GM12878 (cell line): ENCODE measurements at regions of chr3 and their contacts with region 1.

Region 1: DNA sequence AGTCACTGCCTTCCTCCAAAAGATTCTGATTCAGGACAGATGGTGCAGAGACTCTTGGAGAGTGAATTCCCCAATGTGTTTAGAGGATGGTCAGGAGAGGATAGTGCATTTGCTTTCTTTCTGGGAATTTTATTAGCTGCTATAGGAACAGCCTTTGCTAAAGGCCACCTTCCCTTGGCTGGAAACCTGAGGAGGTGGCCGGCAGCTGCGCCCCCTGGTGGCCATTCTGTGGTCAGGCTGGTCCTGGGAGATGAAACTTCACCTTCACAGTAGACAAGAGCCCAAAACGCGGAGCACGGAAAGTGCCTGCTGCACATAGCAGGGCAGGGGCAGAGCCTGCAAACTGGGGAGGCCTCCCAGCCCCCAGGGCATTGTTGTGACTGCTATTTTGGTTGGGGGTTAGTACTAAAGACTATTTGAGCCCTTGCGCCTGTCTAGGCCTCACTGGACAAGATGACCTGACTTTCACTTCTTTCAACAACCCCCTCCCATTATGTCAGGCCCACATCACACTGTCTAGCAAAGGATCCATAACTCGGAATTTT is 34.3 kb downstream of the SEC22C start:
- DNase-seq: no peak
- ATAC-seq: peak; percentile 91
- H3K4me3 ChIP-seq: no peak overlapping the region
- H3K27ac ChIP-seq: no peak overlapping the region
- H3K4me1 ChIP-seq: no peaks in the 10 kb centered on the region
- H3K27me3 ChIP-seq: no peaks in the 10 kb centered on the region
- CTCF ChIP-seq: peak; percentile 83 to 97 (median 90)
- EP300 ChIP-seq: no peak
- POLR2A ChIP-seq: no peak
- RAD21 ChIP-seq: peak; percentile 45

Region 2: DNA sequence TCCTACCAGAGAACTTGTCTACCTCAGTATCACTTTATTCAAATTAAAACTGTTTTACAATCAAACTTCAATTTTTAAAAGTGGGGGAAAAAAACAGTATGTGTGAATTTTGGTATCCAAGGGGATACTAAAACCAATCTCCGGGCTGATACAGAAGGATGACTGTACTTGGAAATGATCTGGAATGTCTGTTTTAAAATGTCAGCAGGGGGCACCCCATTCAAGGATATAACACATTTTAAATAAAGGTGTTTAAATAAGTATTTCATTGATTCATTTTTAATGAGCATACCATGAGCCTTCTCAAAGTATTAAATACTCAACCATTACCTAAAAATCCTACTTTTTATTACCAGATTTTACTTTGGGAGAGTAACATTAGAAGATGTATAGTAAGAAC is 653.5 kb before region 1 on chr3:
- CTCF ChIA-PET with region 1: no interaction called
- POLR2A ChIA-PET with region 1: no interaction called
- RAD21 ChIA-PET with region 1: no interaction called
- SMC1A ChIA-PET with region 1: no interaction called
- in situ Hi-C with region 1: no loop called
- intact Hi-C with region 1: loop called (anchors 10 kb)
- DNase-seq: no peak
- ATAC-seq: no peak
- H3K4me3 ChIP-seq: no peak overlapping the region
- H3K27ac ChIP-seq: no peak overlapping the region
- H3K4me1 ChIP-seq: no peaks in the 10 kb centered on the region
- H3K27me3 ChIP-seq: no peaks in the 10 kb centered on the region
- CTCF ChIP-seq: peak; percentile 18 to 49 (median 34); a peak in 3 of 6 replicates
- EP300 ChIP-seq: no peak
- POLR2A ChIP-seq: no peak
- RAD21 ChIP-seq: peak; percentile 70

Region 3: DNA sequence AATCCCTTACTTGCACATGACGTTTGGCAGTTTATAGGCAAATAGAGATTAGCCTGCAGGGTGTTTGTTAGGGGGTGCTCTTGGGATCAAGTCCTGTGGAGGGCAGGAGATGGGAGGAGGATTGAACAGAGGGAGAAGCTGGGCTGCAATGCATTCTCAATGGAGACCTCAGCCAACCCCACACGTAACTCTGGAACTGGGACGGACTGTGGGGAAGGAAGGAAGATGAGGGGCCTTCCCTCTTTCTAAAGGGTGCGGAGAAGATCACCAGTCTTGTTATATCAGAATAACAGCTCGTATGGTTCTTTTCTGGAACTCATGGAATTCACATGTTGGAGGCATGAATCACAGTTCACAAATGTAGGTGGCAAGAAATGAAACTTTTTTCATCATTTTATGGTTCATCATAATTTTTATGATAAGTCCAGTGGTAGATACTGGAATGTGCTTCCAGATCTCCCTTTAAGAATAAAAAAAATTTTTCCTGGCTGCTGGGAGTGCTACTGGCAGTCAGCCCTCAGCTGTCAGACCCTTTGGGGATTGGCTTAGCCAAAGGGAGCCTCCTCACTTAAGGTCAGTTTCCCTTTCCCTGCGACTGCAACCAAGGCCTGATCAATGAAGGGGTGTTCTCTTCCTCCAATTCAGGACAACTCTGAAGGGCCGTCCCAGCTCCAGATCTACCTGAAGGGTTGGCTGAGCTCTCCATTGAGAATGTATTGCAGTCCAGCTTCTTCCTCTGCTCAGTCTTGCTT is 116.5 kb before region 1 on chr3:
- CTCF ChIA-PET with region 1: no interaction called
- POLR2A ChIA-PET with region 1: no interaction called
- RAD21 ChIA-PET with region 1: no interaction called
- SMC1A ChIA-PET with region 1: no interaction called
- in situ Hi-C with region 1: no loop called
- intact Hi-C with region 1: no loop called
- DNase-seq: no peak
- ATAC-seq: no peak
- H3K4me3 ChIP-seq: no peak overlapping the region
- H3K27ac ChIP-seq: no peak overlapping the region
- H3K4me1 ChIP-seq: no peaks in the 10 kb centered on the region
- H3K27me3 ChIP-seq: no peaks in the 10 kb centered on the region; a peak in 1 of 4 replicates
- CTCF ChIP-seq: no peak
- EP300 ChIP-seq: no peak
- POLR2A ChIP-seq: no peak
- RAD21 ChIP-seq: no peak

Region 4: DNA sequence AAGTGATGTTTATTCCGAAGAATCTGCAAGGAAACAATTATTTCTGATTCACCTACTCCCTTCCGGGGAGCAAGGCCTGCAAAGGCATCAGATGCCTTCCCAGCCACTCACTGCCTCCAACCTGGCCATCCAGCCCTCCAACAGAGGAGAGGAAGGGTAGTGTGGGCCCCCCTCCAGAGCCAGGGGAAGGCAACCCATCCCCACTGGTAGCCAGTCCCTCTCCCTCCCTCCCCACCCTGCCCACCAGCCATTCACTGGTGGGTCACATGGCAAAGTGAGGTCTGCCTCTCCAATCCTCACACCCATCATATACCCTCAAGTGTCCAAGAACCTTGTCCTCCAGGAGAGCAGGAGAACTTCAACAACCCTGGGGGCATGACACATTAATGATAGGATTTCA is 47.4 kb before region 1 on chr3:
- CTCF ChIA-PET with region 1: no interaction called
- POLR2A ChIA-PET with region 1: no interaction called
- RAD21 ChIA-PET with region 1: no interaction called
- SMC1A ChIA-PET with region 1: no interaction called
- in situ Hi-C with region 1: no loop called
- intact Hi-C with region 1: no loop called
- DNase-seq: no peak
- ATAC-seq: no peak
- H3K4me3 ChIP-seq: no peak overlapping the region
- H3K27ac ChIP-seq: no peak overlapping the region
- H3K4me1 ChIP-seq: peaks cover 6% of the 10 kb centered on the region; the same call in 1 of the 2 replicates
- H3K27me3 ChIP-seq: peaks cover 6 to 13% of the 10 kb centered on the region in 2 experiments
- CTCF ChIP-seq: no peak
- EP300 ChIP-seq: no peak
- POLR2A ChIP-seq: no peak
- RAD21 ChIP-seq: no peak

Region 5: DNA sequence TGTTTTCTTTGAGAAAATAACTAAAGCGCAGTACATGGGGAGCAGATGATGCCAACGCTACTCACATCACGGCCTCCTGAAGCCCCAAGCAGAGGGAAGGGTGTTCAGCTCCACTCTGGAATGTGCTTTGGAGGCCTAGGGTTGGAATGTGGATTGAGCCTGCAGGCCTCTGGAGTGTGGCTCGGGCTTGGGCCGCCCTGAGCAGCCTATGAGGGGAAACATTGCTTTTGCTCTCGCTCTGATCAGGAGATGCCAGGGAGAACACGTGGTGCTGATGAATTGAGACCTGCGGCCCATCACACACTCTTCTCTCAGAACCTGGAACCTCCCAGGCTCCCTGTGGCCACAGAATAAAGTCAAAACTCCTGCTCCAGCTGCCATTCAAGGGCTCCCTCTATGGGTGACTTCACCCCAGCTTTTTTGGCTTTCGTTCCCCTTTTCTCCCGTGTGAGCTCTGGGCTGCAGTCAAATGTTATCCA is 202.3 kb after region 1 on chr3:
- CTCF ChIA-PET with region 1: interaction called, 3 read pairs
- POLR2A ChIA-PET with region 1: interaction called, 3 read pairs
- RAD21 ChIA-PET with region 1: no interaction called
- SMC1A ChIA-PET with region 1: no interaction called
- in situ Hi-C with region 1: no loop called
- intact Hi-C with region 1: loop called (anchors 10 kb)
- DNase-seq: no peak
- ATAC-seq: peak; percentile 59
- H3K4me3 ChIP-seq: no peak overlapping the region
- H3K27ac ChIP-seq: no peak overlapping the region
- H3K4me1 ChIP-seq: no peaks in the 10 kb centered on the region
- H3K27me3 ChIP-seq: no peaks in the 10 kb centered on the region
- CTCF ChIP-seq: peak; percentile 43 to 54 (median 53); a peak in 5 of 6 replicates
- EP300 ChIP-seq: no peak
- POLR2A ChIP-seq: no peak
- RAD21 ChIP-seq: peak; percentile 46